ENCODE measurements at regions of chr13 and their contacts with region 1.

Region 1: GRCh38 chr13:69579351-69579750 is 528.3 kb upstream of the ATXN8OS start:
- DNase-seq: no peak
- H3K4me3 Mint-ChIP-seq: no peak overlapping the region
- H3K27ac Mint-ChIP-seq: no peak overlapping the region
- H3K4me1 Mint-ChIP-seq: no peaks in the 10 kb centered on the region
- H3K27me3 Mint-ChIP-seq: peaks cover 52% of the 10 kb centered on the region
- CTCF ChIP-seq: no peak

Region 2: DNA sequence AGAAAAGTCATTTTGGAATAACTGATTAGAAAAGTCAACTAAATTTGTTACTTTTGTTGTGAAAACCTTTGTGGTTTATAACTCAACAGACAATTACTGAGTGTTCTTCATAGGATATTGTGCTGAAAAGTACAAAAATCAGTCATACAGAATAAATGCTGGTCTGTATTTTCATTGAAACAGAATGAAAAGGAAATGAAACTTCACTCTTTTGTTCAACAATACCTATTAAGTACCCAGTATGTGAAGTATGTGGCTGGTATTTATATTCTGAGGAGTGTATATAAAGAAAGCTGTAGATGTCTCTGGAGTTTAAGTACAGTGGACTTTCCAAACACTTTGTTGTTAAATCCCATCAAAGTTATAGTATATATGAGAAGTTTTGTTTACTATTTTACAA is 300.1 kb before region 1 on chr13:
- CTCF ChIA-PET with region 1: no interaction called
- POLR2A ChIA-PET with region 1: no interaction called
- intact Hi-C with region 1: no loop called
- DNase-seq: no peak
- H3K4me3 Mint-ChIP-seq: no peak overlapping the region
- H3K27ac Mint-ChIP-seq: no peak overlapping the region
- H3K4me1 Mint-ChIP-seq: peaks cover 1% of the 10 kb centered on the region
- H3K27me3 Mint-ChIP-seq: no peaks in the 10 kb centered on the region
- CTCF ChIP-seq: no peak

Region 3: GRCh38 chr13:69461397-69461796 is 118.0 kb before region 1 on chr13:
- CTCF ChIA-PET with region 1: no interaction called
- POLR2A ChIA-PET with region 1: no interaction called
- intact Hi-C with region 1: no loop called
- DNase-seq: no peak
- H3K4me3 Mint-ChIP-seq: no peak overlapping the region
- H3K27ac Mint-ChIP-seq: no peak overlapping the region
- H3K4me1 Mint-ChIP-seq: no peaks in the 10 kb centered on the region
- H3K27me3 Mint-ChIP-seq: no peaks in the 10 kb centered on the region
- CTCF ChIP-seq: no peak

Region 4: GRCh38 chr13:69545551-69545950 is 33.8 kb before region 1 on chr13:
- CTCF ChIA-PET with region 1: no interaction called
- POLR2A ChIA-PET with region 1: no interaction called
- intact Hi-C with region 1: no loop called
- DNase-seq: no peak
- H3K4me3 Mint-ChIP-seq: no peak overlapping the region
- H3K27ac Mint-ChIP-seq: no peak overlapping the region
- H3K4me1 Mint-ChIP-seq: no peaks in the 10 kb centered on the region
- H3K27me3 Mint-ChIP-seq: peaks cover 12% of the 10 kb centered on the region
- CTCF ChIP-seq: no peak

Region 5: DNA sequence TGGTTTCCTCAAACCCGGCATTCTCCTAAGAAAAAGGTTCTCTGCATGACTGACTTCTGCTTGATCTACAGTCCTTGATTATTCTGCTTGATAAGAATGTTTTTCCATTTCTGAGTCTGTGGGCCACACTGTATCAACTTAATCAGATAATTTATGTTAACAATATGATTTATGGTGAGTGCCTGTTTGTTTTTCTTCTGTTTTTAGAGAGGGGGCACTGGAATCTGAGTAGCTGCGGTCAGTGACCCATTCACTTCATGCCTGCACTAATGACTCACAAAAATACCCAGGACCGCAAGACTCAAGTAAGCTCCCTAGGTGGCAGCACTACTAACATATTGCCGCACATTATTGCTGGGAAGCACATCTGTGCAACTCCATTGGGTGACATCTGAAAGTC is 14.0 kb before region 1 on chr13:
- CTCF ChIA-PET with region 1: interaction called, 12 read pairs
- POLR2A ChIA-PET with region 1: no interaction called
- intact Hi-C with region 1: no loop called
- DNase-seq: peak; percentile 81
- H3K4me3 Mint-ChIP-seq: no peak overlapping the region
- H3K27ac Mint-ChIP-seq: no peak overlapping the region
- H3K4me1 Mint-ChIP-seq: no peaks in the 10 kb centered on the region
- H3K27me3 Mint-ChIP-seq: peaks cover under 1% of the 10 kb centered on the region
- CTCF ChIP-seq: peak; percentile 38

Region 6: GRCh38 chr13:69857183-69857821 is 278.0 kb after region 1 on chr13:
- CTCF ChIA-PET with region 1: interaction called, 4 read pairs
- POLR2A ChIA-PET with region 1: no interaction called
- intact Hi-C with region 1: loop called (anchors 1 kb)
- DNase-seq: peak; percentile 63
- H3K4me3 Mint-ChIP-seq: no peak overlapping the region
- H3K27ac Mint-ChIP-seq: no peak overlapping the region
- H3K4me1 Mint-ChIP-seq: peaks cover 10% of the 10 kb centered on the region
- H3K27me3 Mint-ChIP-seq: peaks cover 44% of the 10 kb centered on the region
- CTCF ChIP-seq: peak; percentile 53